AG04450 (cell line): ENCODE measurements at regions of chr12 and their contacts with region 1.

Region 1: DNA sequence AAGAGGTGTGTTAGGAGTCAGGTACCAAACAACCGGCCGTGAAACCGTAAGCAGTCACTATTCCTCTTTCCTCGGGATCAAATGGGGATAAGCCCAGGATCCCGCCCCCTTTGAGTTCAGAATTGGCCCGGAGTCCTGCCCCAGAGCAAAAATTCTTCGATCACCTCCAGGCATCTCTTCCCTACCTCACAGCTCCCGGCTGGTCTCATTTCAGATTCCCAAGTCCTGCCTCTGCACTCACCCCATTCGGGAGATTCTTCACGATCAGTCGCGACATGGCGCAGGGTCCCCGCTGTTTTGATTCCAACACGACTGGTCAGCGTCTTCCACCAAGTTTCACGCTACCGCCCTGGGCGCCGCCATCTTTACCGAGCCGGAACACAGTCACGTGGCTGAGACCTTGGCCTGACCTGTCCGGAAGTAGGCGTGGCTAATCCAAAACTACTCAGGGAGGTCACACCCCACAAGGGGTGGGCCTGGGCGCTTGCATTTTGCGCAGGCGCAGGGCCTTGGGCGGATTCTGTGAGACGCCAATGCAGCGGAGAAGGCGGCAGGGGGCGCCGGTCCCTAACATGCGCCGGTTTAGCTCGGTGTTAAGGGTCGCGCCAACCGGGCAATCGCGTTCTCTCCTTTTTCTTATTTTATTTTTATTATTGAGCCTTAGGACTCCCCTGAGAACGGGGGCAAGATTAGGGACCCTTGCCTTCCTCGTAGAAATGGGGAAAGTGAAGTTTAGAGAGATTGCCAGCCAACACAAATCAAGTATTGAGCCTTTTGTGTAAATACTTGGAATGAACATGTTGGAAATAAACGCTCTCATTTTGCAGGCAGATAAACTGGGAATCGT is at the start of gene RBM19:
- DNase-seq: peak; percentile 94
- H3K4me3 ChIP-seq: peak within 1 kb of the TSS; percentile 92
- H3K27ac ChIP-seq: peak within 1 kb of the TSS; percentile 52
- H3K27me3 ChIP-seq: peaks cover 7% of the 10 kb centered on the region
- CTCF ChIP-seq: peak; percentile 94
- polyA plus RNA-seq, gene RBM19: 10.6 and 12.4 TPM in 2 replicates

Region 2: DNA sequence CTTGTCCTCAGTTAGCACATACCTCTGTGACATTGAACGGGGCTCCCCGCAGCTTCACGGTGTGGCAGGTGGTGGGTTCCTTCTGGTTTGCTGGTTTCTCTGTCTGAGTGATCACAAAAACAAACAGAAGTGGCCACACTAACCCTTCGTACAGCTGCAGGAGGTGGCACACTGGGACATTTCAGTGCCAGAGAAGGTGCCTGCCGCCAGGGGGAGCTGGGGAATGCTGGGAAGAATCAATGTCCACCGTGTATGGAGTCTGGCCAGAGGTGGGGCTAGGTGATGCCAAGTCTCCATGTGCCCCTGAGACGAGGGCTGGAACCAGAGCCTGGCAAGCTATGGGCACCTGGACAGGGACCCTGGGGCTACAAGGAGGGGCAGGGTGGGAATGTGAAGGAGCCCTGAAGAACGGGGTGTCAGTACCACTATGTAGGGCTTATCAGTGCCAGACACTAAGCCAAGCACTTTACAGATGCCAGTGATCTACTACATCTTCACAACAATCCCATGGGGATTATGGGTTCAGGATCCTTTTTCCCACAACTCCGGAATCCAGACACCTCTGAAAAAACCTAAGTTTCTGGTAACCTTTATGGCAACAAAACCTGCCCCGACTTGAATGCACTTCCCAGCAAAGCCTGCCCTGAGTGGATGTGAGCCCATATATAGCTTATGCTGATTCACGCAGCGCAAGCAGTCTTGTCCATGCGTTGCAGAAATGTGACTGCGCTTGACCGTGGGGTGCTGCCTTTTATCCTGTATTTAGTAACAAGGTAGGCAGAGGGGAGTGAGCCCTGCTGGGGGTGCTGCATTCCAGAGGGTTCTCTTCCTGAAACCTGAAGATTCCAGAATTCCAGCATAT is 10.8 kb before region 1 on chr12:
- CTCF ChIA-PET with region 1: interaction called, 14 read pairs
- POLR2A ChIA-PET with region 1: interaction called, 3 read pairs
- DNase-seq: no peak
- H3K4me3 ChIP-seq: no peak overlapping the region
- H3K27ac ChIP-seq: no peak overlapping the region
- H3K27me3 ChIP-seq: no peaks in the 10 kb centered on the region
- CTCF ChIP-seq: peak; percentile 62

Region 3: DNA sequence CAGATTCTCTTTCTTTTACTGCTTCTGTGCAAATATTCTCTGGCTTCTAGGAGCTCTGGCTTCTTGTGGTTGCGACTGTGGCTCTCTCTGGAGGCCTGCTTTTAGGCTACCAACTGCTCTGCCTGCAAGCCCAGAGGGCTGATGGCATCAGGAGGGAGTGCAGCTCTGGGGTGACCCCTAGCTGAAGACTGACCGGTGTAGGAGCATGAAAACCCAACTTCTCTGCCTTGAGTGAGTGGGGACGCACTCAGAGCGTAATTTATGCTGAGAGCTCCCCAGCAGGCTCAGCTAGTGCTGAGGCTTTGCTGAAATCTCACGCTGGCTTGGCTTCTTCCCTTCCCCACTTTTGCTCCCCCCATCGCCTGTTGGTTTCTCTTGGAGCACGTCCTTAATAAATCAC is 29.9 kb after region 1 on chr12:
- CTCF ChIA-PET with region 1: no interaction called
- POLR2A ChIA-PET with region 1: no interaction called
- DNase-seq: no peak
- H3K4me3 ChIP-seq: no peak overlapping the region
- H3K27ac ChIP-seq: no peak overlapping the region
- H3K27me3 ChIP-seq: peaks cover 7% of the 10 kb centered on the region
- CTCF ChIP-seq: no peak